Uterus (tissue), 4 donors: ENCODE measurements at regions of chr17 and their contacts with region 1.

Region 1: DNA sequence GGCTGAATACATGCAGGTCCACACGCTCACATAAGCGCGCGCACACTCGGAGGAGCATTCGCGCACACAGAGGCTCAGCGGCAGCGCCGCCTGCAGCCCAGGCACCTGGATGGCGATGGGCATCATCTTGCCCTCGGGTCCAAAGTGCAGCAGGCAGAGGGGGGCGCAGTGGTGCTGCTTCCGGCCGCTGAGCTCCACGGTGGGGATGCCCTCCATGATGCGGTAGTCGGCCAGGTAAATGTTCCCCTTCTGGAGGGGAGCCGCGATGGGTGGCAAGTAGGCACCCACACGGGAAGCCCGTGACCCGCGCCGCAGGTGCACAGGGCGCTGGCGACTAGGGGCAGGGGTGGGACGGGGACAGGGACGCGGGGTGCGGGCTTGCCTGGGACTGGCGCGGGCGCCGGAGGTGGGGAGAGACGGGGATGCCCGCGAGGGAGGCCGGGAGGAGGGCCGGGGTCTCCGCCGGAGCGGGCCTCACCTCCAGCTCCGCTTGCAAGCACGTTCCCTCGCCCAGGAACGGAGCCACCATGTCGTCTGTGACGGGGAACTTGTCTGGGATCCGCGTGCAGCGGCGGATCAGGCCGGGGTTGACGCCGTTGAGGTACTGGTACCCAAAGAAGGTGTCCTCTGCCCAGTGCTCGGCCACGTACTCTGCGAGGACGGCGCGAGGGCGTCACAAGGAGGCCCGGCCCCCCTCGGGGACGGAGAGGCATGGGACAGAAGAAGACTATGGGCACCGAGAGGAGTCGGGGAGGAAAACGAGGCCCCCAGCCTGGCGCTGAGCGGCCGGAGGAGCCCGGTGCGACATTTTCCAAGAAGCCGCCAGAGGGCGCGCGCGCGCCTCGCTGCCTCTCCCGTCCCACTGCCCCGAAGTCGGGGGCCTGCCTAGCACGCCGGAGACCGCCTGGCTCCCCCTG is 8.0 kb downstream of the ALOX12B start:
- DNase-seq: peak; percentile 61 to 73
- H3K4me3 ChIP-seq: peak overlapping the region; percentile 15 to 31
- H3K27ac ChIP-seq: no peak overlapping the region
- H3K4me1 ChIP-seq: peaks cover 0 to 7% of the 10 kb centered on the region in 2 donors
- H3K27me3 ChIP-seq: peaks cover 0 to 15% of the 10 kb centered on the region in 2 donors
- CTCF ChIP-seq: peak; percentile 76 to 93 (median 86)
- POLR2A ChIP-seq: peak in 1 of 2 donors; percentile 12

Region 2: GRCh38 chr17:8300627-8301242 is 221.2 kb after region 1 on chr17:
- intact Hi-C with region 1: loop called (anchors 10 kb)
- DNase-seq: peak; percentile 48 to 49
- H3K4me3 ChIP-seq: no peak overlapping the region
- H3K27ac ChIP-seq: no peak overlapping the region
- H3K4me1 ChIP-seq: no peaks in the 10 kb centered on the region
- H3K27me3 ChIP-seq: no peaks in the 10 kb centered on the region
- CTCF ChIP-seq: peak; percentile 74 to 90 (median 82)
- POLR2A ChIP-seq: no peak